ENCODE measurements at regions of chr1 and their contacts with region 1.

Region 1: DNA sequence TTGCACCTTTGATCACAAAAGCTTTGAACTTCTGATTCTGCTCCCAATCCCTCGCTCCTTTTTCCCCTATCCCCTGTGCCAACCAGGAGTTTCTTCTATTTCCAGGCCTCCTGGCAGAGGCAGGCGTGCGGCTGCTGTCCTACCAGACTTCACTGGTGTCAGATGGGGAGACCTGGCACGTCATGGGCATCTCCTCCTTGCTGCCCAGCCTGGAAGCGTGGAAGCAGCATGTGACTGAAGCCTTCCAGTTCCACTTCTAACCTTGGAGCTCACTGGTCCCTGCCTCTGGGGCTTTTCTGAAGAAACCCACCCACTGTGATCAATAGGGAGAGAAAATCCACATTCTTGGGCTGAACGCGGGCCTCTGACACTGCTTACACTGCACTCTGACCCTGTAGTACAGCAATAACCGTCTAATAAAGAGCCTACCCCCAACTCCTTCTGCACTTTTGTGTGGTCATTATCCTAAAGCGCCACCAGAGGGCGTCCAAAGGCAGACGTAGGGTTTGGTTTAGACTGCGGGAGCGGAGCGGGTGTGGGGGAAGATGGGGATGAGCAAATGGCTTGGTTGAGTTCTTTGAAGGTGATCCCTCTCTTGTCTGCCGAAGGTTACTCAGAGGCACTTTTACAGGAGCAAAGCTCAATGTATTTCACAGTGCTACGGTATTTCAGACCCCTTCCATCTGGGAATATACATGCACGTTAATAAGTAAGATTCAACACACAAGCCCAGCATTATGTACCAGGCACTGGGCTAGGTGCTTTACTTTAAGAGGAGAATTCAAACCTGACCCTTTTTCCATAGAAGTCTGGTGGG is 24.7 kb downstream of the HMGCS2 start:
- DNase-seq: peak; percentile 69
- ATAC-seq: peak; percentile 51 to 55

Region 2: DNA sequence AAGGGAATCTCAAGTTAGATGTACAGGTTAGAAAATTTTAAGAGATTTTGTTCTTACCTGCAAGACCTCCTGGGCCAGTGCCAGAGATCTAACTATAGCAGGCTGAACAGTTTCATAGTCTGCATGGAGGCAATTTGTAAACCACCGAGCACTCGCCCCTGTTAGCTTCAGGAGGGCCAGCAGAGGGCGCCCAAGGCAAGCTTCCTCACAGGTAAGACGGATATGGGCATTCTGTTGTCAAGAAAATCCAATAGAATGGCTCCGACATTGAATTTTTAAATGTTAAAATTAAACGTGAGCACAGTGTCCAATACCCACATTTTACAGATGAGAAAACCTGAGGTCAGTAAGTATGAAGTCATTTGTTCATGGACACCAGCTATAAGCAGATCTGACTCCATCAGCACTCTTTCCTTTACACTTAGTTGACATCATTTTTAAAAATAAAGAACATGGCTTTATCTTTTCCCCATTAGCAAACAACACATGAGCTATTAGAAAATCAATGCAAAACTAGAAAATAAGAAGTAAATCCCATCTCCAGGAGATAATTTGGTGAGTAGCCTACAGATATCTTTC is 65.1 kb after region 1 on chr1:
- intact Hi-C with region 1: loop called in 1 of 2 experiments (anchors 10 kb)
- DNase-seq: peak; percentile 70
- ATAC-seq: peak; percentile 78 to 85

Measured in left cardiac atrium (tissue), 4 donors.